ENCODE measurements at regions of chr10 and their contacts with region 1.

Region 1: GRCh38 chr10:9762966-9763656 is 1254.6 kb upstream of the CELF2 start:
- DNase-seq: peak in 2 of 7 donors; percentile 27 to 45
- H3K4me3 ChIP-seq: no peak overlapping the region
- H3K27ac ChIP-seq: peak overlapping the region in 1 of 5 donors; percentile 36
- H3K4me1 ChIP-seq: peaks cover 0 to 9% of the 10 kb centered on the region in 2 donors
- H3K27me3 ChIP-seq: no peaks in the 10 kb centered on the region
- CTCF ChIP-seq: peak in 1 of 6 experiments; percentile 5
- POLR2A ChIP-seq: no peak

Region 2: GRCh38 chr10:9848981-9849380 is 85.9 kb after region 1 on chr10:
- intact Hi-C with region 1: loop called in 1 of 2 experiments (anchors 10 kb)
- DNase-seq: peak in 5 of 7 donors; percentile 13 to 43 (median 31)
- H3K4me3 ChIP-seq: no peak overlapping the region
- H3K27ac ChIP-seq: no peak overlapping the region
- H3K4me1 ChIP-seq: no peaks in the 10 kb centered on the region
- H3K27me3 ChIP-seq: no peaks in the 10 kb centered on the region
- CTCF ChIP-seq: no peak
- POLR2A ChIP-seq: no peak

Measured in adrenal gland (tissue), 19 donors.